ENCODE measurements at regions of chr2 and their contacts with region 1.

Region 1: DNA sequence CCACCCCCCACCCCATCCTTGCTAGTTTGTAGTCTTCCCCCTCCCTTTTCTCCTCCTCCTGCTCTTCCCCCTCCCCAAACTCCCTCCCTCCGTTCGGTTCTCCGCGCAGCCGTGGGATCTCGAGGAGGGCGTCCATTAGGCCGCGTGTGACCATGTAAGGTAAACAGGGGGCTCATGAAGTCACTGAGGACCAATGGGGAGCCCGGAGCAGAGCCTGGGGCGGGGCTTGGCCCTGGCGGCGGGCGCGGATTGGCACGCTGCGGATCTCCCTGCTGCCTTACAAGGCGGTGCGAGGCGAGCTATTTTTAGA is 246 bp upstream of the KLF7 start:
- DNase-seq: peak; percentile 99
- H3K4me3 Mint-ChIP-seq: peak overlapping the region; percentile 90
- H3K27ac Mint-ChIP-seq: peak overlapping the region; percentile 99
- H3K4me1 Mint-ChIP-seq: peaks cover 44% of the 10 kb centered on the region
- H3K27me3 Mint-ChIP-seq: no peaks in the 10 kb centered on the region
- CTCF ChIP-seq: no peak

Region 2: DNA sequence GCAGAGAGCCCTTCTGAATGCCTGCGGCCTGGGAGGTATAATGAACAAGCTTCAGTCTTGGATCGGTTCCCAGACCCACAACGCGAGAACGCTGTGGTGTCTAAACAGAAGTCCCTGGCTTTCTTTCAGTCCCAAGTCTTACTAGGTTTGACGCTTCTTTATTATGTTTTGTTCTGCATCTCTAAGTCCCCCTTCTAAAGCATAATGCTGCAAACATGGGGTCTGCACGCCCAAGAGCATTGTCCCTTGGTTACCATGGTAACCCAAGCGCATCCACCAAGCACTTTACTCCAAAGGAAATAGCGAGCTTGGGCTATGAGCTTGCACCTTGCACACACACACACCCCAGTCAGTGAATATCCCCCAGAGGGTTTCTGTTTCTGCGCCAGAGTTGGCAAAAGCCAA is 1273.7 kb before region 1 on chr2:
- CTCF ChIA-PET with region 1: no interaction called
- POLR2A ChIA-PET with region 1: no interaction called
- intact Hi-C with region 1: no loop called
- DNase-seq: peak; percentile 77
- H3K4me3 Mint-ChIP-seq: peak overlapping the region; percentile 6
- H3K27ac Mint-ChIP-seq: peak overlapping the region; percentile 75
- H3K4me1 Mint-ChIP-seq: peaks cover 8% of the 10 kb centered on the region
- H3K27me3 Mint-ChIP-seq: peaks cover 12% of the 10 kb centered on the region
- CTCF ChIP-seq: no peak

Region 3: GRCh38 chr2:207073801-207074678 is 92.0 kb before region 1 on chr2:
- CTCF ChIA-PET with region 1: no interaction called
- POLR2A ChIA-PET with region 1: interaction called, 5 read pairs
- intact Hi-C with region 1: loop called (anchors 5 kb)
- DNase-seq: no peak
- H3K4me3 Mint-ChIP-seq: no peak overlapping the region
- H3K27ac Mint-ChIP-seq: no peak overlapping the region
- H3K4me1 Mint-ChIP-seq: no peaks in the 10 kb centered on the region
- H3K27me3 Mint-ChIP-seq: no peaks in the 10 kb centered on the region
- CTCF ChIP-seq: no peak

Region 4: GRCh38 chr2:207149249-207150213 is 16.5 kb before region 1 on chr2:
- CTCF ChIA-PET with region 1: interaction called, 7 read pairs
- POLR2A ChIA-PET with region 1: interaction called, 143 read pairs
- intact Hi-C with region 1: no loop called
- DNase-seq: no peak
- H3K4me3 Mint-ChIP-seq: no peak overlapping the region
- H3K27ac Mint-ChIP-seq: peak overlapping the region; percentile 89
- H3K4me1 Mint-ChIP-seq: peaks cover 64% of the 10 kb centered on the region
- H3K27me3 Mint-ChIP-seq: no peaks in the 10 kb centered on the region
- CTCF ChIP-seq: no peak

Region 5: GRCh38 chr2:207238831-207239701 is 73.1 kb after region 1 on chr2:
- CTCF ChIA-PET with region 1: interaction called, 7 read pairs
- POLR2A ChIA-PET with region 1: interaction called, 172 read pairs
- intact Hi-C with region 1: loop called (anchors 5 kb)
- DNase-seq: peak; percentile 99
- H3K4me3 Mint-ChIP-seq: no peak overlapping the region
- H3K27ac Mint-ChIP-seq: no peak overlapping the region
- H3K4me1 Mint-ChIP-seq: peaks cover 15% of the 10 kb centered on the region
- H3K27me3 Mint-ChIP-seq: no peaks in the 10 kb centered on the region
- CTCF ChIP-seq: no peak

Region 6: DNA sequence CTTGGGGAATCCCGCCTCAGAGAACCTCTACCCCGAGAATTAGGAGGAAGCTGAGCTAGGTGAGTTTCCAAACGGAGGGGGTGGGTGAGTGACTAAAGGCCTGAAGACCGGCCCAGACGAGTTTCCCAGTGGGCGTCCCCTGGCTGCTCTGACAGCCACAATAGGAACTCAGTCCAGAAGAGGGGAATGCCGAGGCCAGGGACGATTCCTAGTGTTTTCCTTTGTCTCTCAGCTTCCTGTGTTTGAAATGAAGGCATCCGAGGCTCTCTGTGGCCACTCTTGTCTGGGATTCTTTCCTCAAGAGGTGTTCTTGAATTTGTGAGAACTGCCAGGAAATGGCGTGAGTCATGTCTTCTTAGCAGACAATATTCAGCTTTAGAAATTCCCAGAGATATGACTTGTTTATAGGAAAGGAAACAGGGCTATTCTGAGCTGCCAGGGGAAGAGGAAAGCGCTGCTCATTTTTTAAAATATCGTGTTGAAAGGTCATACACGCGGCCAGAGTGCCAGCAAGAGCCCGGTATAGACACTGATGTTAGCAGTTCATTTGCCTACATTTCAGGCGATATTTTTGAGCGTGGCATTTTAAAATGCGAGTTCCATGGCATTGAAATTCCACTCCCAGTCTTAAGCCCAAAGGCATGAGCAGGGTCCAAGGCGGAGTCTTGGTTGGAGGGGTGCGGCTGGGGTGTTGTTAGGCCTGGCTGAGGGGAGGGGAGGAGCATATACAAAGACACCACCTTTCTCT is 168.8 kb after region 1 on chr2:
- CTCF ChIA-PET with region 1: interaction called, 4 read pairs
- POLR2A ChIA-PET with region 1: interaction called, 194 read pairs
- intact Hi-C with region 1: loop called (anchors 1 kb)
- DNase-seq: peak; percentile 97
- H3K4me3 Mint-ChIP-seq: peak overlapping the region; percentile 70
- H3K27ac Mint-ChIP-seq: peak overlapping the region; percentile 98
- H3K4me1 Mint-ChIP-seq: peaks cover 58% of the 10 kb centered on the region
- H3K27me3 Mint-ChIP-seq: no peaks in the 10 kb centered on the region
- CTCF ChIP-seq: no peak

Region 7: GRCh38 chr2:207529330-207530159 is 363.6 kb after region 1 on chr2 and contains the start of gene CREB1:
- CTCF ChIA-PET with region 1: interaction called, 3 read pairs
- POLR2A ChIA-PET with region 1: interaction called, 22 read pairs
- intact Hi-C with region 1: no loop called
- DNase-seq: peak; percentile 98
- H3K4me3 Mint-ChIP-seq: peak within 1 kb of the TSS; percentile 94
- H3K27ac Mint-ChIP-seq: peak within 1 kb of the TSS; percentile 100
- H3K4me1 Mint-ChIP-seq: peaks cover 18% of the 10 kb centered on the region
- H3K27me3 Mint-ChIP-seq: no peaks in the 10 kb centered on the region
- CTCF ChIP-seq: no peak
- total RNA-seq, gene CREB1: 54.6 and 71.3 TPM in 2 replicates